ENCODE measurements at regions of chr2 and their contacts with region 1.

Region 1: GRCh38 chr2:82576656-82577055 is 1882.4 kb downstream of the SUCLG1 start:
- DNase-seq: no peak
- H3K4me3 ChIP-seq: no peak overlapping the region
- H3K27ac ChIP-seq: no peak overlapping the region
- H3K4me1 ChIP-seq: no peaks in the 10 kb centered on the region
- H3K27me3 ChIP-seq: no peaks in the 10 kb centered on the region
- CTCF ChIP-seq: no peak

Region 2: GRCh38 chr2:82355622-82356021 is 221.0 kb before region 1 on chr2:
- intact Hi-C with region 1: no loop called
- DNase-seq: no peak
- H3K4me3 ChIP-seq: no peak overlapping the region
- H3K27ac ChIP-seq: no peak overlapping the region
- H3K4me1 ChIP-seq: no peaks in the 10 kb centered on the region
- H3K27me3 ChIP-seq: no peaks in the 10 kb centered on the region
- CTCF ChIP-seq: no peak

Region 3: GRCh38 chr2:82591718-82592117 is 15.1 kb after region 1 on chr2:
- intact Hi-C with region 1: loop called (anchors 1 kb)
- DNase-seq: no peak
- H3K4me3 ChIP-seq: no peak overlapping the region
- H3K27ac ChIP-seq: no peak overlapping the region
- H3K4me1 ChIP-seq: no peaks in the 10 kb centered on the region
- H3K27me3 ChIP-seq: no peaks in the 10 kb centered on the region
- CTCF ChIP-seq: no peak

Region 4: GRCh38 chr2:82675186-82675585 is 98.5 kb after region 1 on chr2:
- intact Hi-C with region 1: no loop called
- DNase-seq: no peak
- H3K4me3 ChIP-seq: no peak overlapping the region
- H3K27ac ChIP-seq: no peak overlapping the region
- H3K4me1 ChIP-seq: no peaks in the 10 kb centered on the region
- H3K27me3 ChIP-seq: no peaks in the 10 kb centered on the region
- CTCF ChIP-seq: no peak

Measured in ascending aorta (tissue), 2 donors.